Activated T-helper 2 cell treated with anti-CD3 and anti-CD28 coated beads, Interferon-gamma antibody, Interleukin-2, Interleukin-4, amounts not matched to agents 10 μg/mL and 5 μg/mL and 100 μg/mL, durations not matched to agents 14 hours and 24 hours and 36 hours (primary cell): ENCODE measurements at regions of chr3 and their contacts with region 1.

Region 1: GRCh38 chr3:44439499-44440295 is 37.8 kb downstream of the ZNF445 start:
- DNase-seq: peak; percentile 71
- H3K4me3 Mint-ChIP-seq: peak overlapping the region; percentile 57
- H3K27ac Mint-ChIP-seq: peak overlapping the region; percentile 90
- H3K4me1 Mint-ChIP-seq: peaks cover 44% of the 10 kb centered on the region
- H3K27me3 Mint-ChIP-seq: no peaks in the 10 kb centered on the region

Region 2: DNA sequence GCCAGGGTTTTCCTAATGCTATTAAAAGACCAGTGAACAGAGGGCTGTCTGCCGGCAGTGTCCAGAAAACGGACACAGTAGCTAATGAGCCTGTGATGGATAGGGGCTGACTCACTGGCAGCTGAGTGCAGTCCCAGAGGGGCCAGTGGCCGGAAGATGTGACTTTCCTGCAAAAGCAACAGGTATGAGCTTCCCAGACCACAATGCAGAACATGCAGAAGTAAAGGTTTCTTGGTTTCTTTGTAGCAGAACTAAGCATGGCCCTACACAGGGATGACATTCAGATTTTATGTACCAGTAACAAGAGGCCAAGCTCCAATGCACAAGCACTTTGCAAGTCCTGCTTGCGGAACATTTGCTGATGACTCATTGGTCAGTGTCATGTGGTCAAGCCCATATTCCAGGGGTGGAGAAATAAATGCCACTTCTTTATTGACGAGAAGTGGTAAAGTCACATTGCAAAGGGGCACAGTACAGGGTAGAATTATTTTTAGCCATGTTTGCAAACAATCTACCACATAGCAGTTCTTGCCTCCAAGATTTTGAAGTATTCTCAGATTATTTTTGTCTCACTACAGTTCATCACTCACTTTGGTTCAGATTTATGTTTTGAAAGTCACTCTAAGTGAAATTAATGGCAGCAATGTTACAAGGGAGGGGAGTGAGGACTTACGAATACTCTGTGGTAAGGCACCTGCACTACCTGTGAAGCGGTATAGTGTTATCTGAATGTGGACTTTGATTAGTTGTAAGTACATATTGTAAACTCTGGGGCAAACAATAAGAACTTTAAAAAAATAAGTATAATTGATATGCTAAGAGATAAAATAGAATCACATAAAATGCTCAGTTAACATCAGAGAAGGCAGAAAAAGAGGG is 485.6 kb before region 1 on chr3:
- intact Hi-C with region 1: no loop called
- DNase-seq: no peak
- H3K4me3 Mint-ChIP-seq: no peak overlapping the region
- H3K27ac Mint-ChIP-seq: no peak overlapping the region
- H3K4me1 Mint-ChIP-seq: peaks cover 4% of the 10 kb centered on the region
- H3K27me3 Mint-ChIP-seq: peaks cover 24% of the 10 kb centered on the region

Region 3: DNA sequence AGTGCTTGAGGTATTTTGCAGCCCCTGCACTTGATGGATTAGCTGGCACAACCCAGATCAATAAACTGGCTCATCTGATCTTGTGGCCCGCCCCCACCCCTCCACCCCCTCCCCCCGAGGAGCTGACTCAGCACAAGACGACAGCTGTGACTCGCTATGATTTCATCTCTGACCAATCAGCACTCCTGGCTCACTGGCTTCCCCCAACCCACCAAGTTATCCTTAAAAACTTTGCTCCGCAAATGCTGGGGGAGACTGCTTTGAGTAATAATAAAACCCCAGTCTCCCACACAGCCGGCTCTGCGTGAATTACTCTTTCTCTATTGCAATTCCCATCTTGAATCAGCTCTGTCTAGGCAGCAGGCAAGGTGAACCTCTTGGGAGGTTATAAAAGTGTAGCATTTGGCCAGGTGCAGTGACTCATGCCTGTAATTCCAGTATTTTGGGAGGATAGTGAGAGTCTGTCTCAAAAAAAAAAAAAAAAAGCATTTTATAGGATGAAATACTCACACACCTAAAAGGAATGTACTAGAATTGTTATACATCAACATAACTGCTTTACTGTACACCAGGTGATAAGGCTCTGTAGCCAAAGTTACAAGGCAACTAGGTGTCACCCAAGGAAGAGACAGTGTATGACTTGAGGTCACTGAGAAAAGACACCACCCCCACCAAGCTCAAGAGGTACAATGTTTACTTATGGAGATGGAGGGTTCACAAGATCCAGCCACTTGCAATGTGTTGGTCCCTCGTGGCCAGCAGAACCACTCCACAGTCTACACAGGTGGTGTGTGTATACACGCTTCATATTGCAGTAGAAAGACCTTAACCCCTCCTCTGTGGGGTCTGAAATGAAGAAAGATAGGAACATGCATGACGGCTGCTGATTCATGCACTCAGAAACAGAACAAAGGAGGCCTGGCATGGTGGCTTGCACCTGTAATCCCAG is 29.1 kb after region 1 on chr3:
- intact Hi-C with region 1: loop called (anchors 1 kb)
- DNase-seq: no peak
- H3K4me3 Mint-ChIP-seq: no peak overlapping the region
- H3K27ac Mint-ChIP-seq: peak overlapping the region; percentile 10
- H3K4me1 Mint-ChIP-seq: peaks cover 32% of the 10 kb centered on the region
- H3K27me3 Mint-ChIP-seq: no peaks in the 10 kb centered on the region

Region 4: GRCh38 chr3:44477312-44478030 is 37.8 kb after region 1 on chr3 and contains the start of gene ZNF445:
- intact Hi-C with region 1: loop called (anchors 1 kb)
- DNase-seq: peak; percentile 76
- H3K4me3 Mint-ChIP-seq: peak within 1 kb of the TSS; percentile 91
- H3K27ac Mint-ChIP-seq: peak within 1 kb of the TSS; percentile 82
- H3K4me1 Mint-ChIP-seq: peaks cover 27% of the 10 kb centered on the region
- H3K27me3 Mint-ChIP-seq: no peaks in the 10 kb centered on the region
- total RNA-seq, gene ZNF445: 22.6 and 24.0 TPM in 2 replicates

Region 5: GRCh38 chr3:44510000-44510368 is 70.3 kb after region 1 on chr3:
- intact Hi-C with region 1: loop called (anchors 1 kb)
- DNase-seq: no peak
- H3K4me3 Mint-ChIP-seq: peak overlapping the region; percentile 93
- H3K27ac Mint-ChIP-seq: peak overlapping the region; percentile 84
- H3K4me1 Mint-ChIP-seq: peaks cover 19% of the 10 kb centered on the region
- H3K27me3 Mint-ChIP-seq: no peaks in the 10 kb centered on the region